ENCODE measurements at regions of chr15 and their contacts with region 1.

Region 1: DNA sequence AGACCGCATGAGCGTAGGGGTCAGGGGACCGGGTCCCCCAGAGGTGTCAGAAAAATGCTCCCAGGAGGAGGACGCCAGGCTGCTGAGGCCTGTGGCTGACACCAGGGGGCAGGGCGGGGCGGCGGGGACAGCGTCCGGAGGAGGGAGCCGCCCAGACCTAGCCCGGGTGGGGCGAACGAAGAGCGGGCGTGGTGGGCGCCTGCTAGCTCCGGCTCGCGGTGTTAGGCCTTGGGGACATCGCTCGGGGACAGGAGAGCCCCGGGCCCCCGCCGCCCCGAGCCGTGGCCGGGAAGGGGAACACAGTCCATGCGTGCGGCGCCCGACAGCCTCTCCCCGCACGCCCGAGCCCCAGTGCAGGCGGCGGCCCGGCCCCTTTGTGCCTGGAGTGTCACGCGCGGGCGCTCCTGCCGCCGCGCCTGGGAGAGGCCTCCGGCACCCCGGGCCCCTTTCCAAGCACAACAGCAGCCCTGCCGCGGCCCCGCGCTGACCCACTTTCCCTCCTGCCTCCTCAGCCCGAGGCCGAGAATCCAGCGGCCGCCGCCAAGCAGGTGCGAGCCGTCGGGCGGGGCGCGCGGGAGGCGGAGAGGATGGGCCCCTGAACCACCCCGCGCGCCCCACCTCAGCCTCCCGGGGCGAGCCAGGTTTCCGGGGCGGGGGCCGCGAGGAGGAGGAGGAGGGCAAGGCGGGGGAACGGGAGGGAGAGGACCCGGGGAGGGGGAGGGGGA is 111.0 kb upstream of the KLF13 start:
- DNase-seq: peak in 3 of 4 donors; percentile 70 to 98 (median 90)
- ATAC-seq: peak; percentile 82
- H3K4me3 ChIP-seq: peak overlapping the region; percentile 60 to 62
- H3K27ac ChIP-seq: peak overlapping the region; percentile 98 to 100
- H3K4me1 ChIP-seq: peaks cover 7 to 63% of the 10 kb centered on the region in 2 donors
- H3K27me3 ChIP-seq: no peaks in the 10 kb centered on the region
- CTCF ChIP-seq: peak; percentile 73 to 92

Region 2: GRCh38 chr15:31326156-31326732 is 110.6 kb after region 1 on chr15:
- intact Hi-C with region 1: loop called in 1 of 2 experiments (anchors 5 kb)
- DNase-seq: peak; percentile 98 to 99 (median 99)
- ATAC-seq: peak; percentile 87
- H3K4me3 ChIP-seq: peak overlapping the region; percentile 91 to 97
- H3K27ac ChIP-seq: peak overlapping the region; percentile 99 to 100
- H3K4me1 ChIP-seq: peaks cover 17 to 51% of the 10 kb centered on the region in 2 donors
- H3K27me3 ChIP-seq: no peaks in the 10 kb centered on the region
- CTCF ChIP-seq: no peak

Region 3: DNA sequence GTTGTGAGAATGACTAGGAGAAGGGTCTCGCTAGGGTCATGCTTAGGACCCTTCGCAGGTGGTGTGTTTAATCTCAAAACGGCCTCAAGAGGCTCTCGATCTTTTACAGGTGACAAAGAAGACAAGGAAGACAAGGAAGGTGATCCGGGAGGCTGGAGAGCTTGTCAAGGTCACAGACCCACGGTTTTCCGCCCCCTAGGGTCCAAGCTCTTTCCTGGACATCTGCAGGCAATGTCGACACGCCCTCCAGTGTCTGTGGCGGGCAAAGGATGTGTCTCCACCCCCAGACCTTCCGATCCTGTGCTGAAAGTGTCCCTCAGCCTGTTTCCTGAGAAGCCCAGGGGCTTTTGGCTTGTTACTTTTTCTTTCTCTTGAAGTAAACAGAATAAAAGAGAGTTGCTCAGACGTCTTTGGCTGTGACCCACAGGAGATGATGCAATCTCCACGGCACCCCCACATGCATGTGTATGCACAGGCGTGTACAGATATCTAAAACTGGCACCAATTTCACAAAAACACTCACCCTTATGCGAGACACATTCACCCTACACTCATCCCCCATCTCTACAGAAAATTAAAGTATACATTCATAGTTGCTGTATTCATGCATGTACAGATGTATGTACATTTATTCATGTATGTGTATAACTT is 219.7 kb after region 1 on chr15:
- intact Hi-C with region 1: loop called in 1 of 2 experiments (anchors 10 kb)
- DNase-seq: peak; percentile 33 to 87 (median 76)
- ATAC-seq: peak; percentile 69
- H3K4me3 ChIP-seq: peak overlapping the region in 1 of 2 donors; percentile 29
- H3K27ac ChIP-seq: peak overlapping the region; percentile 74 to 92
- H3K4me1 ChIP-seq: peaks cover 18 to 61% of the 10 kb centered on the region in 2 donors
- H3K27me3 ChIP-seq: no peaks in the 10 kb centered on the region
- CTCF ChIP-seq: peak; percentile 48 to 68